Aorta (tissue), 5 donors: ENCODE measurements at regions of chr19 and their contacts with region 1.

Region 1: DNA sequence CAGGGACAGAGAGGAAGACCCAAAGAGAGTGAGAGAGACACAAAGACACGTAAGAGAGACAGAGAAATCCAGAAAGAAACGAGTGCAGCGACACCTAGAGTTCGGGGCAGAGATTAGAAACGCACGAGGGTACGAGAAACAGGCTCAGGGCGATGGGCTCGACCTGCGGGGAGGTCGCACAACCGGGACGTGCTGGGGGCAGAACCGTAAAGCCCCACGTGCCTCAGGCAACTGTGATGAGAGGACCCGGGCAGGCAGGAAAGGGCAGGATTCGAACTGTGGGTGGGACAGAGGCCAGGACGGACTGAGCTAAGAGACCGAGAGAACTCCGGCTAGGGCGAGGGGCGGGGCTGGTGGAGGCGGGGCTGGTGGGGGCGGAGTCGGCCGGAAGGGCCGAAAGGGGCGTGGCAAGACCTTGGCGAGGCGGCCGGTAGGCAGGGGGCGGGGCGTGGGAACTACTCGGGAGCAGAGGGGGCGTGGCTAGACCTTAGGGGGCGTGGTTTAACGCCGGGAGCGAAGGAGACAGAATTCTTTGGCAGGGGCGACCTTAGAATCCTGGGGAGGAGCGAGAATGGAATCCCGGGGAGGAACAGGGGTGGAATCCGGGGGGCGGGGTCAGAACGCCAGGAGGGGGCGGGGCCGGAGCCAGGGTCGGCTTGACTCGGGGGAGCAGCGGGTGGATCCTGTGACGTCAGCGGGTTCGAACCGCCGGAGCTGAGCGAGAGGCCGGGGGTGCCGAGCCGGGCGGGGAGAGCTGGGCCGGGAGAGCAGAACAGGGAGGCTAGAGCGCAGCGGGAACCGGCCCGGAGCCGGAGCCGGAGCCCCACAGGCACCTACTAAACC is at the start of gene NECTIN2:
- DNase-seq: peak; percentile 100
- ATAC-seq: peak; percentile 93
- H3K4me3 ChIP-seq: peak within 1 kb of the TSS; percentile 76 to 88
- H3K27ac ChIP-seq: peak within 1 kb of the TSS; percentile 51 to 80
- H3K4me1 ChIP-seq: no peaks in the 10 kb centered on the region
- H3K27me3 ChIP-seq: no peaks in the 10 kb centered on the region
- total RNA-seq, gene NECTIN2: 88.2 to 97.8 TPM

Region 2: GRCh38 chr19:44782729-44783128 is 63.1 kb before region 1 on chr19:
- intact Hi-C with region 1: loop called in 1 of 2 experiments (anchors 5 kb)
- DNase-seq: no peak
- ATAC-seq: no peak
- H3K4me3 ChIP-seq: no peak overlapping the region
- H3K27ac ChIP-seq: no peak overlapping the region
- H3K4me1 ChIP-seq: no peaks in the 10 kb centered on the region
- H3K27me3 ChIP-seq: peaks cover 0 to 1% of the 10 kb centered on the region in 2 donors

Region 3: DNA sequence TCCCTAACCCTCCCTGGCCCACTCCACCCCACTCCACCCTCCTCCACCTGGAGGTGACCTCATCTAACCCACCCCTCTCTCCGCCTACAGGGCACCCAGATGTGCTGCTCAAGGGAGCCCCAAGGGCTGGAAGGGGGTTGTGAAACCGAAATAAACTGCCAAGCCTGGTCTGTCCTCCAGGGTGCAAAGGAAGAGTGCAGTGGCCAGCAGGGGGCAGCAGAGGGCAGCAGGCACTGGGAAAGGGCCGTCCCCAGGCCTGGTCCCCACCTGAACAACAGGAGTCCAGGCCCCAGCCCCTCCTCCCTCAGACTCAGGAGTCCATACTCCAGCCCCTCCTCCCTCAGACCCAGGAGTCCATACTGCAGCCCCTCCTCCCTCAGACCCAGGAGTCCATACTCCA is 45.4 kb before region 1 on chr19:
- intact Hi-C with region 1: loop called (anchors 1 kb)
- DNase-seq: peak; percentile 91 to 96
- ATAC-seq: peak; percentile 92
- H3K4me3 ChIP-seq: no peak overlapping the region
- H3K27ac ChIP-seq: no peak overlapping the region
- H3K4me1 ChIP-seq: no peaks in the 10 kb centered on the region
- H3K27me3 ChIP-seq: no peaks in the 10 kb centered on the region

Region 4: GRCh38 chr19:44890366-44891015 is 44.7 kb after region 1 on chr19:
- intact Hi-C with region 1: loop called (anchors 2 to 5 kb)
- DNase-seq: peak in 1 of 2 donors; percentile 100
- ATAC-seq: peak; percentile 97
- H3K4me3 ChIP-seq: peak overlapping the region in 1 of 2 donors; percentile 33
- H3K27ac ChIP-seq: peak overlapping the region in 1 of 2 donors; percentile 94
- H3K4me1 ChIP-seq: no peaks in the 10 kb centered on the region
- H3K27me3 ChIP-seq: no peaks in the 10 kb centered on the region